HCT116 (cell line): ENCODE measurements at regions of chr14 and their contacts with region 1.

Region 1: DNA sequence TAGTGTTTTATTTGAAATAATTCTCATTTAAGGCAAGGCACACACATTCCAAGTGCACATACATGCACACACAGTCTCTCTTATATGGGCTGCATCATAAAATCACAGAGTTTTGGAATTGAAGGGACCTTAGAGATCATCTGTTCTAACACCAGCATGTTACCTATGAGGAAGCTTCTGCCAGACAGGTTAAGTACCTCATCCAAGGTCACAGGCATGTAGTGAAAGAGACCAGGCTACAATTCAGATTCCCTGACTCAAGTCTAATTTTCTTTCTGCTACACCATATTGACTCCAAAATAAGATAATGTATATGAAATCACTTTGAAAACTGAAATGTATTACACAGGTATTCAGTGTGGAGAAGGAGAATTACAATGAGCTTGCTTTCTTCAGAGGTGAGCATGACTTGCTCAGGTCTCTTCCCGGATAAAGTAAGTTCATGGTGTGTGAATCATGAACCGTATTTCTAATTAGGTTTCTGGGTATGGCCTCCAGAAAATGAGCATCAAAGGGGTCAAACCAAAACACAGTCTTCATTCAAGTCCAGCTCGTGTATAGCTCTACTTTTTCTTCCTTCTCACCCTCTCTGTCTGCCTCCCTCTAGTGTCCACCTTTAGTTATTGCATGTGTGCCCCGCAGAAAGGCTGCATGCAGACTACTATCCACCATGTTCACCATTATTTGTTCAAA is 411.9 kb downstream of the FUT8 start:
- DNase-seq: peak; percentile 56
- ATAC-seq: peak; percentile 94
- H3K4me3 ChIP-seq: no peak overlapping the region
- H3K27ac ChIP-seq: no peak overlapping the region
- H3K4me1 ChIP-seq: no peaks in the 10 kb centered on the region
- H3K27me3 ChIP-seq: peaks cover 20% of the 10 kb centered on the region; the same call in 1 of the 2 replicates
- CTCF ChIP-seq: peak; percentile 64 to 93 (median 87); a peak in 5 of 6 replicates
- POLR2A ChIP-seq: no peak
- RAD21 ChIP-seq: peak; percentile 80

Region 2: GRCh38 chr14:65810322-65810721 is 14.1 kb before region 1 on chr14:
- CTCF ChIA-PET with region 1: interaction called, 17 read pairs
- POLR2A ChIA-PET with region 1: no interaction called
- RAD21 ChIA-PET with region 1: no interaction called
- intact Hi-C with region 1: no loop called
- DNase-seq: no peak
- ATAC-seq: no peak
- H3K4me3 ChIP-seq: no peak overlapping the region
- H3K27ac ChIP-seq: no peak overlapping the region
- H3K4me1 ChIP-seq: no peaks in the 10 kb centered on the region
- H3K27me3 ChIP-seq: 0 out of 2 replicates have a peak, but pooled peaks cover 4% of the 10 kb centered on the region
- CTCF ChIP-seq: no peak
- POLR2A ChIP-seq: no peak
- RAD21 ChIP-seq: no peak